ENCODE measurements at regions of chr9 and their contacts with region 1.

Region 1: DNA sequence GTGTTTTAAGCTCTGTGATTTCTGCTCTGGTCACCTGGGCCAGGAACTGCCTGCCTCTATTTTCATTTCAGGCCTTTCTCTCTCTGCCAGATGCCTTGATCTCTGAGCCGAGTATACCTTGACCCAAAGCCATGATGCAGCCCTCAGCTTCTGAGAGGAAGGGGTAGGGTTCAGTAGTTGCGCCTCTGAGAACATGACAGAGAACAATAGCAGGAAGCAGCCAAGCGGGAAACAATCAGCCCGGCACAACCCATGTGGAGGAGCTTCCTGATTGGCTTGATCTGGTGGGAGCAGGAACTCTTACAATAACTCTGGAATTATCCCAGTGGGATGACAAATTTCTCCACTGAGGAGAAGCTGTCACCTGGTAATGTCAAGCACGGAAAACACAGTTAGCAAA is 127.4 kb downstream of the PALM2AKAP2 start:
- DNase-seq: no peak
- ATAC-seq: peak; percentile 34
- H3K4me3 ChIP-seq: no peak overlapping the region
- H3K27ac ChIP-seq: peak overlapping the region in 1 of 2 donors; percentile 62
- H3K4me1 ChIP-seq: peaks cover 11 to 30% of the 10 kb centered on the region in 2 donors
- H3K27me3 ChIP-seq: no peaks in the 10 kb centered on the region
- CTCF ChIP-seq: no peak

Region 2: GRCh38 chr9:110058304-110058953 is 151.0 kb after region 1 on chr9:
- intact Hi-C with region 1: loop called in 1 of 2 experiments (anchors 5 kb)
- DNase-seq: peak in 1 of 4 donors; percentile 43
- ATAC-seq: peak; percentile 93
- H3K4me3 ChIP-seq: no peak overlapping the region
- H3K27ac ChIP-seq: peak overlapping the region in 1 of 2 donors; percentile 25
- H3K4me1 ChIP-seq: peaks cover 0 to 37% of the 10 kb centered on the region in 2 donors
- H3K27me3 ChIP-seq: no peaks in the 10 kb centered on the region
- CTCF ChIP-seq: peak; percentile 14 to 48

Region 3: DNA sequence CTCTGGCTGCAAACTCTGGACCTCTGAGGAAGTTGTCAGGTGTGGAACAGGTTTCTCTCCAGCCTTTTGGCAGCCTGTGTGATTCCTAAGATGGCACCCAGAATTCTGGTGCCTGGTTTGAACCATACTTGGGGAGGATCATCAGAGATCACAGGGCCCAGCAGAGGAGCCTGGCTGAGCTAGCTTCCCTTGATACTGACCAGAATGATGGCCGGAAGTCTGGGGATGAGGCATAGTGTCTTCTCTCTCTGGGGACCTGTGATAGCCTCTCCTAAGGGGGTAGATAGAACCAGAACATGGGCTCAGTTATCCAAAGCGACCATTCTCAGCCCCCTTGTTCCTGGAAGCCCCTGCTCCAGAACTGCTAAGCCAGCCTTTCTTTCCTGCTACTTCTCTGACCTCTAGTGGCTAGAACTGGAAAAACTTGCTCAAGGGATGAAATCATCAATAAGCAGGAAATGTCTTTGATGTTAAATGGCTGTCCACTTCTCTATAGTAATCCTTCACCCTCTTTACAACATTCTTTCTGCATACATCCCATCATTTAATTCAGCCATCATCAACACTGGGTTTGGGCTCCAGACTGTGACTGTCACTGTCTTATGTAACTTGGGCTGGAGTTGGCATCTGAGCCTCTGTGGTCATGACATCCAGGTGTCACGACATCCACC is 245.4 kb after region 1 on chr9:
- intact Hi-C with region 1: loop called in 1 of 2 experiments (anchors 5 kb)
- DNase-seq: peak in 2 of 4 donors; percentile 46 to 62
- ATAC-seq: peak; percentile 42
- H3K4me3 ChIP-seq: no peak overlapping the region
- H3K27ac ChIP-seq: no peak overlapping the region
- H3K4me1 ChIP-seq: peaks cover 20 to 68% of the 10 kb centered on the region in 2 donors
- H3K27me3 ChIP-seq: no peaks in the 10 kb centered on the region
- CTCF ChIP-seq: peak; percentile 59 to 74

Region 4: DNA sequence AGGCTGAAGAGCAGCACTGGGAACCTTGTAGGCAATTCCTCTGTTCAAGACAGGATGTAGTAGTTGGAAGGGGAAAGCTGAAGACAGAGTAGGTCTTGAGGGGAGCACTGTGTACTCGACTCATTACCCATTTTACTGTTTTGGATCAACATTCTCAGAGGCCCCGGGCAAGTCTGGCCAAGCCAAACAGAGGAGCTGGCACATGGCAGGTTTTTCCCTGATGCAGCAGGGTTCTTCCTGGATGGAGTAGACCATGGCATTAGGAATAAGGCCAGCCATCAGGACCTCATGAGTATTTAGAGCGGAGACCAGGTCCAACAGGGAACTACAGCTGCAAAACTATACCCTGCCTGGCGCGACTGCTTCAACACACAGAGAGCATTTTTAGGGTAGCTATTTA is 667.8 kb after region 1 on chr9:
- intact Hi-C with region 1: no loop called
- DNase-seq: no peak
- ATAC-seq: no peak
- H3K4me3 ChIP-seq: no peak overlapping the region
- H3K27ac ChIP-seq: no peak overlapping the region
- H3K4me1 ChIP-seq: peaks cover 0 to 9% of the 10 kb centered on the region in 2 donors
- H3K27me3 ChIP-seq: peaks cover 24 to 40% of the 10 kb centered on the region in 2 donors
- CTCF ChIP-seq: no peak

Measured in left lung (tissue), 14 donors.